ENCODE measurements at regions of chr5 and their contacts with region 1.

Region 1: DNA sequence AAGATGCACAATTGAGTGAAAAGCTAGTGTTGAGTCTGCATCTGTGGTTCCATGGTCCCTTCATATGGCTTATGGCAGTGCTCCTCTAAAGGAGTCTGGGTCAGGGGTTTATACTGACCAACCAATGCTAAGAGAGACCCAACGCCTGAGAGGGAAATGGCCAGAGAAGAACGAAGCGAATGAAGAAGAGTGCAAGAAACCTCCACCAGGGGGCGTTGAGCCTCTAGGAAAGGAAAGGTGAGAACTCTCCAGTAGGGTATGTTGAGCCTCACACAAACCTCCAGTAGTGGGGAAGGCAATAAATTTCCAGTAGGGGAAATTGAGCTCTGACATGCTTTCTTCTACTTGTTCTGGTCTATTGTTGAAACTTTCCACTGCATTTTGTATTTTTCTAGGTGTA is 470.6 kb downstream of the PRDM9 start:
- DNase-seq: no peak
- ATAC-seq: peak; percentile 91
- H3K4me3 ChIP-seq: no peak overlapping the region
- H3K27ac ChIP-seq: no peak overlapping the region
- H3K4me1 ChIP-seq: no peaks in the 10 kb centered on the region
- H3K27me3 ChIP-seq: no peaks in the 10 kb centered on the region
- CTCF ChIP-seq: peak; percentile 27 to 40 (median 31); a peak in 3 of 6 replicates
- EP300 ChIP-seq: no peak
- POLR2A ChIP-seq: no peak
- RAD21 ChIP-seq: 0 out of 2 replicates have a peak, but pooled peaks have one; percentile 11

Region 2: GRCh38 chr5:24110004-24110615 is 132.1 kb after region 1 on chr5:
- CTCF ChIA-PET with region 1: no interaction called
- POLR2A ChIA-PET with region 1: no interaction called
- RAD21 ChIA-PET with region 1: no interaction called
- SMC1A ChIA-PET with region 1: no interaction called
- in situ Hi-C with region 1: no loop called
- intact Hi-C with region 1: loop called (anchors 2 kb)
- DNase-seq: no peak
- ATAC-seq: peak; percentile 38; the same call in 2 of the 3 replicates
- H3K4me3 ChIP-seq: no peak overlapping the region
- H3K27ac ChIP-seq: no peak overlapping the region
- H3K4me1 ChIP-seq: no peaks in the 10 kb centered on the region
- H3K27me3 ChIP-seq: no peaks in the 10 kb centered on the region
- CTCF ChIP-seq: peak in 2 of 3 experiments; percentile 37 to 38; a peak in 3 of 6 replicates
- EP300 ChIP-seq: no peak
- POLR2A ChIP-seq: no peak
- RAD21 ChIP-seq: peak; percentile 37